ENCODE measurements at regions of chr18 and their contacts with region 1.

Region 1: GRCh38 chr18:76398896-76399612 is 96.0 kb downstream of the ZNF516 start:
- DNase-seq: peak; percentile 83 to 87
- H3K4me3 ChIP-seq: no peak overlapping the region
- H3K27ac ChIP-seq: no peak overlapping the region
- H3K4me1 ChIP-seq: no peaks in the 10 kb centered on the region
- H3K27me3 ChIP-seq: no peaks in the 10 kb centered on the region
- CTCF ChIP-seq: peak; percentile 96 to 99

Region 2: GRCh38 chr18:76339246-76339620 is 59.8 kb before region 1 on chr18:
- intact Hi-C with region 1: no loop called
- DNase-seq: no peak
- H3K4me3 ChIP-seq: no peak overlapping the region
- H3K27ac ChIP-seq: no peak overlapping the region
- H3K4me1 ChIP-seq: no peaks in the 10 kb centered on the region
- H3K27me3 ChIP-seq: no peaks in the 10 kb centered on the region
- CTCF ChIP-seq: no peak

Region 3: GRCh38 chr18:76620321-76621170 is 221.5 kb after region 1 on chr18:
- intact Hi-C with region 1: loop called (anchors 5 kb)
- DNase-seq: peak; percentile 81 to 86
- H3K4me3 ChIP-seq: peak overlapping the region; percentile 41 to 49
- H3K27ac ChIP-seq: peak overlapping the region; percentile 46 to 52
- H3K4me1 ChIP-seq: peaks cover 0 to 24% (median 12%) of the 10 kb centered on the region in 4 donors
- H3K27me3 ChIP-seq: peaks cover 0 to 3% of the 10 kb centered on the region in 2 donors
- CTCF ChIP-seq: peak; percentile 40 to 59

Region 4: DNA sequence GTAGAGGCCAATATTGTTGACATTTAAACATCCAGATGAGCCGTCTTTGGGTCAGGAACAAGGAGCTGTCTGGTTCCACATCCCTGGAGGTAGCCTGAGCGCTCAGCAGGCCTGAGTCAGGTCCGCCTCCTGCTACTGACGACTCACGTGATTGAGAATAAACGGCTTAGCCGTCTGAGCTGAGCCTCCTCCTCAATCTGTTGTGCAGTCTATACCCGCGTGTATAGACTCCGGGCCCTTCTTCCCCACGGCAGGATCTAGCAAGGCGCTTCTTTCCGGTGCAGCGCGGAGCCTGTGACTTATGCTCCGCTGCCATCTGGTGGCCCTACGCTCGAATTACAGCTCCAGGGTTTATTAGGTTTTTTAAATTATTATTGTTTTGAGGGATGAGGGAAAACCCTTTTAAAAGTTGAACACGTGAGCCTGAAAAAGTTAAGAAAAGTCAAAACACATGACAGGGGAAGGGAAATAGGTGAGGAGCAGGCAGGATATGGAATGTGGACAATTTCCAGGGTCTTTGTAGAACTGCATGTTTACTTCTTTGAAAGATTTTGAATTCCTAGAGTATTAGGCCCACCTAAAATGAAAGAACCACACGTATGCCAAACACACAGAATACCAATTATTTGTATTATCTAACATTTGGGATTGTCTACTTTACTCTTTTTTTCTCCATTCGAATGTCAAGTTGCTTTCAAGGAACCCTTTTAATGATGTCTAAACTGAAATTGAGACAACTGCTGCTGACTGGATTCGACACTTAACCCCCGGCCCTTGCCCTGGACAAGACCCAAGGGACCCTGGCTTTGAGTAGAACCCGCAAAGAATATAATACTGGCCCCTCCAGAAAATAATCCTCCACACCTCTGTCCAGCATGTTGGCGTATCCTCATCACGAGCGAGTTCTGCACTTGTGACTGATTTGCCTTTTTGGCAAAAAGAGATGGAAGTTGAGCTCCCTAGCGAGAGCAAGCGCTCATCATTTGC is 310.9 kb after region 1 on chr18:
- intact Hi-C with region 1: loop called (anchors 2 kb)
- DNase-seq: peak; percentile 73 to 74
- H3K4me3 ChIP-seq: no peak overlapping the region
- H3K27ac ChIP-seq: no peak overlapping the region
- H3K4me1 ChIP-seq: no peaks in the 10 kb centered on the region
- H3K27me3 ChIP-seq: peaks cover 0 to 3% of the 10 kb centered on the region in 2 donors
- CTCF ChIP-seq: peak; percentile 85 to 93

Measured in tibial artery (tissue), 4 donors.